ENCODE measurements at regions of chr1 and their contacts with region 1.

Region 1: DNA sequence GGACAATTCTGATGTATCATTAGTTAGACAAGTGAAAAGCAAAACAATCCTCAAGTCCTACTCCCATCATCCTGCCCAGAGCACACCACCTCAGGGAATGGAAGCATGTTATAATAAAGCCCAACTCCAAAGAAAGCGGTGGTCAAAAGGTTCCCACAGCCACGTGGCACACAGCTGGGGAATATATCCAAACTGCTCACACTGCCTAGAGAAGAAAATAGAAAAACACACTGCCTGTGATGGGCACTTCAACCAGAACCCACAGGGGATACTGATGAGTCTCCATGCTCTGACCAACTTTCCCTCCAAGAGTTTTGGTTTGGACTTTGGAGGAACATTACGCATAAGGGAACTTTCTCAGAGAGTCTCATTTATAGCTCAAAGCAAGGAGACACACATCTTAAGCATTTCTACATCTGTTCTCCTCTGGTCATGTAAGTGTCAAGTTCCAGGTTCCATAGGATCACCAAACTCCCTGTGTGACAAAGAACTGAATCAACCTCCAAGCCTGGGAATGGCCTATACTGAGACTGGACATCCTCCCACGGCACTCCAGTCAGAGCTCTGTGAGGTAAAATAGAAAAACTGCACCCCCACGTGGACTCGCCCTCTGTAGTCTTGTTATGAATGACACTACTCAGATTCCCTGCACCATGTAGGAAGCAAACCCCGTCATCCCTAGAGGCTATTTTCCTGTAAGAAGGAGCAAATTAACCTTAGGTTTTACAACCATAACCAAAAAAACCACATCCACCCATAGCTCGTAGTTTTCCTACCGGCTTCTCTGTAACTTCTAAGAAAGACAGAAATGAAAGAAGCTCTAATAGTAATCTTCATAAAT is 12.2 kb downstream of the DSTYK start:
- DNase-seq: peak; percentile 65
- ATAC-seq: peak; percentile 82
- H3K4me3 Mint-ChIP-seq: peak overlapping the region; percentile 57
- H3K27ac Mint-ChIP-seq: peak overlapping the region; percentile 59
- H3K4me1 Mint-ChIP-seq: peaks cover 41% of the 10 kb centered on the region
- H3K27me3 Mint-ChIP-seq: no peaks in the 10 kb centered on the region

Region 2: GRCh38 chr1:205183676-205184335 is 15.5 kb before region 1 on chr1:
- CTCF ChIA-PET with region 1: interaction called, 20 read pairs
- DNase-seq: no peak
- ATAC-seq: no peak
- H3K4me3 Mint-ChIP-seq: peak overlapping the region; percentile 25
- H3K27ac Mint-ChIP-seq: peak overlapping the region; percentile 74
- H3K4me1 Mint-ChIP-seq: peaks cover 64% of the 10 kb centered on the region
- H3K27me3 Mint-ChIP-seq: no peaks in the 10 kb centered on the region

Region 3: GRCh38 chr1:205211169-205211838 is 12.0 kb after region 1 on chr1 and contains the start of gene DSTYK:
- CTCF ChIA-PET with region 1: interaction called, 12 read pairs
- DNase-seq: peak; percentile 95
- ATAC-seq: peak; percentile 90
- H3K4me3 Mint-ChIP-seq: peak within 1 kb of the TSS; percentile 89
- H3K27ac Mint-ChIP-seq: peak within 1 kb of the TSS; percentile 88
- H3K4me1 Mint-ChIP-seq: peaks cover 50% of the 10 kb centered on the region
- H3K27me3 Mint-ChIP-seq: no peaks in the 10 kb centered on the region
- total RNA-seq, gene DSTYK: 8.7 to 11.6 TPM